Activated T-helper 1 cell treated with anti-CD3 and anti-CD28 coated beads, Interleukin-12 subunit alpha, Interleukin-12 subunit beta, Interleukin-2, Interleukin-4 antibody, amounts not matched to agents 30 ng/mL and 10 ng/mL and 1 ng/mL, durations not matched to agents 14 hours and 24 hours and 36 hours (primary cell): ENCODE measurements at regions of chr9 and their contacts with region 1.

Region 1: DNA sequence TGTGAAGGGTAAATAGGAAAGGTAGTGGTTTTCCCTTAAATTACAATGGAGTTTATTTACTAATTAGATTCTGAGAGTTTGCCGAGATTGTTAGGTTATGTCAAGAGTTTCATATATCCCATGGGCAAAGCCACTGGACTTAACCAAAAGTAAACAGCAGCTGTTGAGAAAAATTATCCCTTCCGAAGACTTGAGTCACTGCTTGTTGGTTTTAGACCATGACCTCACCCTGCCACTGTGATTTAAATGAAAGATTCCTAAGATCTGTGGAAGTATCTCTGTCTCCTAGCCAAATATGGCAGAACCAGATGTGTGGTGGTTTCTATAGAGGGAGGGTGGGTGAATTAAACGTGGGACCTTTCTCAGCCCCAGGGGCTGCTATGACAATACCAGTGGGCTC is 19.3 kb downstream of the DMRT3 start:
- DNase-seq: no peak
- H3K4me3 Mint-ChIP-seq: no peak overlapping the region
- H3K27ac Mint-ChIP-seq: no peak overlapping the region
- H3K4me1 Mint-ChIP-seq: peaks cover 6% of the 10 kb centered on the region
- H3K27me3 Mint-ChIP-seq: peaks cover 20% of the 10 kb centered on the region

Region 2: DNA sequence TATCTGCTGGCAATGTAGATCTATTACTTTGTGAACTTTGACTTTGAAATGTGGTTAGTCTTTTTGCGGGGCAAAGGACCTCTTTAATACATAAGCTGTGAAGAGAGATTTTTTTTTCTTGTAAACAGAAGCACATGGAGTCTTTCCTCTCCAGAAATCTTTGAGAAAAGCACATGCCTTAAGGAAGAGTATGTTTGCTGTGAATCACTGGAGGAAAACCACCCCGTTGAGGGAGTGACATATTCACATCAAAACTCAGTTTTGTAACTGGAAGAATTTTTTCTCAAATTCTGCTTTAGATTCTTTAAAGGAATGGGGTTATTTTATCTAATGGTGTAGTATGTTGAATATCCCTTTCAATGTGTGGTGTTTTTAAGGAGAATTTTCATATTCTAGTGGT is 15.7 kb before region 1 on chr9:
- intact Hi-C with region 1: loop called (anchors 1 kb)
- DNase-seq: no peak
- H3K4me3 Mint-ChIP-seq: no peak overlapping the region
- H3K27ac Mint-ChIP-seq: no peak overlapping the region
- H3K4me1 Mint-ChIP-seq: no peaks in the 10 kb centered on the region
- H3K27me3 Mint-ChIP-seq: peaks cover 87% of the 10 kb centered on the region

Region 3: GRCh38 chr9:1115370-1115769 is 119.6 kb after region 1 on chr9:
- intact Hi-C with region 1: no loop called
- DNase-seq: no peak
- H3K4me3 Mint-ChIP-seq: no peak overlapping the region
- H3K27ac Mint-ChIP-seq: no peak overlapping the region
- H3K4me1 Mint-ChIP-seq: no peaks in the 10 kb centered on the region
- H3K27me3 Mint-ChIP-seq: no peaks in the 10 kb centered on the region